Gastrocnemius medialis (tissue), 4 donors: ENCODE measurements at regions of chr1 and their contacts with region 1.

Region 1: GRCh38 chr1:159780583-159781582 is at the start of gene DUSP23:
- DNase-seq: peak; percentile 97 to 98
- ATAC-seq: peak; percentile 96 to 97
- H3K4me3 ChIP-seq: peak within 1 kb of the TSS; percentile 73 to 95 (median 85)
- H3K27ac ChIP-seq: peak within 1 kb of the TSS; percentile 81 to 92 (median 84)
- H3K4me1 ChIP-seq: peaks cover 15 to 20% of the 10 kb centered on the region in 2 donors
- H3K27me3 ChIP-seq: no peaks in the 10 kb centered on the region
- CTCF ChIP-seq: peak; percentile 90 to 94 (median 93)
- POLR2A ChIP-seq: peak; percentile 76 to 83
- total RNA-seq, gene DUSP23: 47.0 to 94.6 (median 77.2) TPM

Region 2: GRCh38 chr1:159765838-159766237 is 15.0 kb before region 1 on chr1:
- in situ Hi-C with region 1: no loop called
- intact Hi-C with region 1: no loop called
- DNase-seq: no peak
- ATAC-seq: no peak
- H3K4me3 ChIP-seq: no peak overlapping the region
- H3K27ac ChIP-seq: no peak overlapping the region
- H3K4me1 ChIP-seq: no peaks in the 10 kb centered on the region
- H3K27me3 ChIP-seq: no peaks in the 10 kb centered on the region
- CTCF ChIP-seq: no peak
- POLR2A ChIP-seq: no peak

Region 3: GRCh38 chr1:159829273-159829634 is 48.4 kb after region 1 on chr1:
- in situ Hi-C with region 1: no loop called
- intact Hi-C with region 1: loop called (anchors 2 kb)
- DNase-seq: peak; percentile 26 to 38
- ATAC-seq: peak; percentile 57 to 60
- H3K4me3 ChIP-seq: no peak overlapping the region
- H3K27ac ChIP-seq: peak overlapping the region in 1 of 4 donors; percentile 63
- H3K4me1 ChIP-seq: peaks cover 0 to 10% of the 10 kb centered on the region in 2 donors
- H3K27me3 ChIP-seq: peaks cover 0 to 2% (median 0%) of the 10 kb centered on the region in 3 donors
- CTCF ChIP-seq: peak in 3 of 5 experiments; percentile 38 to 48 (median 47)
- POLR2A ChIP-seq: no peak

Region 4: GRCh38 chr1:159891275-159892157 is 110.6 kb after region 1 on chr1:
- in situ Hi-C with region 1: no loop called
- intact Hi-C with region 1: loop called (anchors 1 kb)
- DNase-seq: peak; percentile 54 to 71
- ATAC-seq: peak; percentile 87 to 94
- H3K4me3 ChIP-seq: no peak overlapping the region
- H3K27ac ChIP-seq: no peak overlapping the region
- H3K4me1 ChIP-seq: peaks cover 3 to 13% of the 10 kb centered on the region in 2 donors
- H3K27me3 ChIP-seq: no peaks in the 10 kb centered on the region
- CTCF ChIP-seq: peak; percentile 86 to 95 (median 90)
- POLR2A ChIP-seq: no peak

Region 5: GRCh38 chr1:160006312-160006940 is 225.5 kb after region 1 on chr1:
- in situ Hi-C with region 1: loop called in 1 of 4 experiments (anchors 25 kb)
- intact Hi-C with region 1: no loop called
- DNase-seq: peak in 1 of 2 donors; percentile 23
- ATAC-seq: no peak
- H3K4me3 ChIP-seq: no peak overlapping the region
- H3K27ac ChIP-seq: no peak overlapping the region
- H3K4me1 ChIP-seq: no peaks in the 10 kb centered on the region
- H3K27me3 ChIP-seq: no peaks in the 10 kb centered on the region
- CTCF ChIP-seq: peak; percentile 11 to 66 (median 30)
- POLR2A ChIP-seq: no peak

Region 6: DNA sequence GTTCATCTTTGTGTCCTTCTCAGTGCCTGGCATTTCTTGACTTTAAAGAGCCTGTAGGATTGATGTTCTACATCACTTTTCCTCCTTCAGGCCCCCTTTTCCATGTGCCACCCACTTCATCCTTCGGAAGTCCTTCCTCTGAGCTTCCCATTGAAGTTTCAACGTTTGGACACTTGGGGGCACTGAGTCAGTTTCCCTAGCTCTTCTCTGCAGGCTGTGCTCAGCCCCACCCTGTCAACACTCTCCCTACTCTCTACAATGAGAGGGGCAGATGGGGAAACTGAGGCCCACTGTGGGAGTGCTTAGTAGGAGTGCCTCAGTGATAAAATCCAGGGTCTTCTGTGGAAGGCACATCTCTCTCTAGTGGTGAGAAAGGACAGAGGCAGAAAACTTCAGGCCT is 277.2 kb after region 1 on chr1:
- in situ Hi-C with region 1: no loop called
- intact Hi-C with region 1: no loop called
- DNase-seq: no peak
- ATAC-seq: no peak
- H3K4me3 ChIP-seq: no peak overlapping the region
- H3K27ac ChIP-seq: no peak overlapping the region
- H3K4me1 ChIP-seq: no peaks in the 10 kb centered on the region
- H3K27me3 ChIP-seq: no peaks in the 10 kb centered on the region
- CTCF ChIP-seq: peak in 1 of 5 experiments; percentile 9
- POLR2A ChIP-seq: no peak